Endothelial cell of umbilical vein (primary cell): ENCODE measurements at regions of chr19 and their contacts with region 1.

Region 1: DNA sequence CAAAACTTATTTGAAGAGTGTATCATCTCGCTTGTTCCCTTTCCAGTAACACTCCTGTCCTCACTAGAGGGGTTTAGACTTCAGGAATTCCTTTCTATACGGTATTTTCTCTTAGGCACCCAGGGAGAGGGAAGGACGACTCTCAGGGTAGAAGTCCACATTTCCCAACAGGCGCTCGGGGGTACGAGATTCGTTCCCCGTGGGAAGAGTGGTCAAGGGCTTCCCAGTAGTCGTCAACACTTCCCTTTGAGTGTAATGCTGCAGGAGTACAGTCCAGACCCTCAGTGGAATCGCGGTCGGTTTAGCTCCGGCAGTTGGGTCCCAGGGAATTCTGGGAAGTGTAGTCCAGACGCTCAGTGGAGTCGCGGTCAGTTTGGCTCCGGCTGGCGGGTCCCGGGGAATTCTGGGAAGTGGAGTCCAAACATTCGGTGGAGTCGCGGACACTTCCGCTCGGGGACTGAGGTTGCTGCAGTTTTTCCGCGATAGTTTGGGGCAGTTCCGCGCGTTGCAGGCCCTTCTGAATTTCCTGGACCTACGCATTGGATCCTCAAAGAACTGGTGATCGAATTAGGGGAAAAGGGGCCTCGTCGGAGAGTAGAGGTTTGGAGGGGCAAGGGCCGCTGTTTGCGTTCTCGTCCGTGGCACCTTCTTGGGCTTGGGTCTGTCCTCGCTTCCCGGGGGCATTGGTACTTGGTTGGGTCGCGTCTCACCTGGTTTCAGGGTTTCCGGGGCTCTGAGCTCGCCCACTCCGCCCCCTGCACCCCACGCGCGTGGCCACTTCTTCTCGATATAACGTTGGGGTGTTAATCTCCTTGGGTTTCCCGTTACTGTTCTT is at the start of gene ZNF224:
- DNase-seq: peak; percentile 95
- H3K4me3 ChIP-seq: peak within 1 kb of the TSS; percentile 57 to 97 (median 95)
- H3K27ac ChIP-seq: peak within 1 kb of the TSS; percentile 42
- H3K4me1 ChIP-seq: peaks cover 8% of the 10 kb centered on the region
- H3K27me3 ChIP-seq: no peaks in the 10 kb centered on the region
- CTCF ChIP-seq: no peak
- POLR2A ChIP-seq: peak; percentile 59
- total RNA-seq, gene ZNF224: 19.4 and 21.8 TPM in 2 replicates

Region 2: GRCh38 chr19:43826787-43827754 is 267.1 kb before region 1 on chr19 and contains the start of gene ZNF283:
- CTCF ChIA-PET with region 1: interaction called, 3 read pairs
- POLR2A ChIA-PET with region 1: no interaction called
- dilution Hi-C with region 1: no loop called
- intact Hi-C with region 1: loop called (anchors 10 kb)
- DNase-seq: peak; percentile 79
- H3K4me3 ChIP-seq: peak within 1 kb of the TSS; percentile 68 to 94 (median 71)
- H3K27ac ChIP-seq: no peak within 1 kb of the TSS
- H3K4me1 ChIP-seq: peaks cover 4% of the 10 kb centered on the region
- H3K27me3 ChIP-seq: peaks cover 0 to 3% of the 10 kb centered on the region in 2 experiments
- CTCF ChIP-seq: no peak
- POLR2A ChIP-seq: peak; percentile 72
- total RNA-seq, gene ZNF283: 6.0 and 10.7 TPM in 2 replicates

Region 3: DNA sequence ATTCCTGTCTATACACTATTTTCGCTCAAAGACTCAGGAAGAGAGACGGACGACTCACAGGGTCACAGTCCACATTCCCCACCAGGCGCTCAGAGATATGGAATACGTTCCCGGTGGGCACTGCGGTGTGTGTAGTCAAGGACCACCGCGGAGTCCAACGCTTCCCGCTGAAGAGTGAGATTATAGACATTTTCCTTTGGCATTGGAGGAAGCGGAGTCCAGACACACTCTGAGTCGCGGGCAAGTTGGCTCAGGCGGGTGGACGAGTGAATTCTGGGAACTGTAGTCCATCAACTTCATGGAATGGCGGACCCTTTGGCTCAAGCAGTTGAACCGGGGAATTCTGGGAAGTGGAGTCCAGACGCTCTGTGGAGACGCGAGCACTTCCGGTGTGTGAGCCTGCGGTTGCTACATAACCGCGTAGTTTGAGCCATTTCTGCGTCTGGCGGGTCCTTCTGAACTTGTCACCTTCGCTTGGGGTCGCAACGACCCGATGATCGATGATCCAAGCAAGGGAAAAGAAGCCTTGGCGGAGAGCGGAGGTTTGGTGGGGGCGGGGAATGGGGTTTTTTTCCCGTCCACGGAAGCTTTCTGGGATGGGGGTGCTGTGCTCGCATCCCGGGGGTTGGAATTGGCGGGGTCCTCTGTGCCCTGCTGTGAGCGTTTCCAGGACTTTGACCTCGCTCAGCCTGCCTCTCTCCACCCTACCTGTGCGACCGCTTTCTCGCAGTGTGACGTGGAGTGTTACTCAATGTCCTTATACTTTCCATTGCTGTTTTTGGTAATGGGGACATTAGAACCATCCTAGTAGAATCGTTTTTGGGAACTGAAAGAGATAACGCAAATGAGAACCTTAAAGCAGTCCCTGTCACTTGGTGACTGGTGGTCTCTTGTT is 91.3 kb before region 1 on chr19 and contains the start of gene ZNF230:
- CTCF ChIA-PET with region 1: no interaction called
- POLR2A ChIA-PET with region 1: no interaction called
- dilution Hi-C with region 1: no loop called
- intact Hi-C with region 1: loop called (anchors 2 kb)
- DNase-seq: peak; percentile 96
- H3K4me3 ChIP-seq: peak within 1 kb of the TSS; percentile 59 to 86 (median 84)
- H3K27ac ChIP-seq: peak within 1 kb of the TSS; percentile 36
- H3K4me1 ChIP-seq: peaks cover 6% of the 10 kb centered on the region
- H3K27me3 ChIP-seq: no peaks in the 10 kb centered on the region
- CTCF ChIP-seq: no peak
- POLR2A ChIP-seq: peak; percentile 69
- total RNA-seq, gene ZNF230: 2.9 TPM in 2 replicates

Region 4: DNA sequence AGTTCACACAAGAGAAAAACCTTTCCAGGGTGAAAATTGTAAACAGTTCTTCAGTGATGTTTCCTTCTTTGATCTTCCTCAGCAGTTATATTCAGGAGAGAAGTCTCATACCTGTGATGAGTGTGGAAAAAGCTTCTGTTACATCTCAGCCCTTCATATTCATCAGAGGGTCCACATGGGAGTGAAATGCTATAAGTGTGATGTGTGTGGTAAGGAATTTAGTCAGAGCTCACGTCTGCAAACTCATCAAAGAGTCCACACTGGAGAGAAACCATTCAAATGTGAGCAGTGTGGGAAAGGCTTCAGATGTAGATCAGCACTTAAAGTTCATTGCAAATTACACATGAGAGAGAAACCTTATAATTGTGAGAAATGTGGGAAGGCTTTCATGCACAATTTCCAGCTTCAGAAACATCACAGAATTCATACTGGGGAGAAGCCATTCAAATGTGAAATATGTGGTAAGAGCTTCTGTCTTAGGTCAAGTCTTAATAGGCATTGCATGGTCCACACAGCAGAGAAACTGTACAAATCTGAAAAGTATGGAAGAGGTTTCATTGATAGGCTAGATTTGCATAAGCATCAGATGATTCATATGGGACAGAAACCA is 62.0 kb before region 1 on chr19:
- CTCF ChIA-PET with region 1: no interaction called
- POLR2A ChIA-PET with region 1: no interaction called
- dilution Hi-C with region 1: no loop called
- intact Hi-C with region 1: no loop called
- DNase-seq: no peak
- H3K4me3 ChIP-seq: no peak overlapping the region
- H3K27ac ChIP-seq: no peak overlapping the region
- H3K4me1 ChIP-seq: no peaks in the 10 kb centered on the region
- H3K27me3 ChIP-seq: no peaks in the 10 kb centered on the region
- CTCF ChIP-seq: no peak
- POLR2A ChIP-seq: no peak

Region 5: GRCh38 chr19:44071824-44072542 is 22.2 kb before region 1 on chr19 and contains the start of gene ZNF284:
- CTCF ChIA-PET with region 1: interaction called, 4 read pairs
- POLR2A ChIA-PET with region 1: no interaction called
- dilution Hi-C with region 1: no loop called
- intact Hi-C with region 1: loop called (anchors 1 kb)
- DNase-seq: peak; percentile 91
- H3K4me3 ChIP-seq: peak within 1 kb of the TSS; percentile 10 to 67 (median 55)
- H3K27ac ChIP-seq: peak within 1 kb of the TSS; percentile 14
- H3K4me1 ChIP-seq: peaks cover 10% of the 10 kb centered on the region
- H3K27me3 ChIP-seq: no peaks in the 10 kb centered on the region
- CTCF ChIP-seq: no peak
- POLR2A ChIP-seq: peak; percentile 64
- total RNA-seq, gene ZNF284: 2.4 and 2.7 TPM in 2 replicates

Region 6: DNA sequence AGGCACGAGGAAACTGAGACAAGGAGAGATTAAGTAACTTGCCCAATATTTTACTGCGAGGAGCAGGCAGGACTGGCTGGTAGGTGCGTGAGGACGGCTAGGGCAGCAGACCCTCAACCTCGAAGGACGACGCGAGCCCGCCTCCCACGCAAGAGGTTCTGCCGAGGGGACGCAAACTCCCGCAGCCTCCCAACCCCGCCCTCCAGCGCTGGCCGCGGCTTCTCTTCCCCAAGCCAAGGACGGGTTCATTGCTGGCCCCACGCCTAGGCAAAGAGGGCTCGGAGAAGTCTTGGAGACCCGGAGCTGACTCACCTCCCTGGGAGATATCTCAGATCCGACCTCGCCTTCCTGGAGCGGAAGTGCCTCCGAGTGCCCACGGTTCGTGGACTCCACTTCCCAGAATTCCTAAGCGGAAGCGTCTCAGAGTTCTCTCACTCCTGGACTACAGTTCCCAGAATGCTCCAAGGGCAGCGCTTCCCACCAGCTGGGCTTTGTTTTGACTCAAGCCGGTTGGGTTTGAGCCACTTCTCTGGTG is 210.6 kb after region 1 on chr19 and contains the start of gene ZNF235:
- CTCF ChIA-PET with region 1: no interaction called
- POLR2A ChIA-PET with region 1: no interaction called
- dilution Hi-C with region 1: no loop called
- intact Hi-C with region 1: loop called (anchors 1 kb)
- DNase-seq: peak; percentile 97
- H3K4me3 ChIP-seq: peak within 1 kb of the TSS; percentile 76 to 95 (median 82)
- H3K27ac ChIP-seq: peak within 1 kb of the TSS; percentile 63
- H3K4me1 ChIP-seq: peaks cover 5% of the 10 kb centered on the region
- H3K27me3 ChIP-seq: no peaks in the 10 kb centered on the region
- CTCF ChIP-seq: no peak
- POLR2A ChIP-seq: peak; percentile 51
- total RNA-seq, gene ZNF235: 5.2 TPM in 2 replicates

Region 7: GRCh38 chr19:44401139-44402115 is 307.3 kb after region 1 on chr19 and contains the start of gene ZNF285:
- CTCF ChIA-PET with region 1: no interaction called
- POLR2A ChIA-PET with region 1: no interaction called
- dilution Hi-C with region 1: no loop called
- intact Hi-C with region 1: loop called (anchors 5 kb)
- DNase-seq: peak; percentile 98
- H3K4me3 ChIP-seq: peak within 1 kb of the TSS; percentile 46 to 66 (median 55)
- H3K27ac ChIP-seq: no peak within 1 kb of the TSS
- H3K4me1 ChIP-seq: no peaks in the 10 kb centered on the region
- H3K27me3 ChIP-seq: no peaks in the 10 kb centered on the region
- CTCF ChIP-seq: no peak
- POLR2A ChIP-seq: peak; percentile 19
- total RNA-seq, gene ZNF285: 3.6 and 4.6 TPM in 2 replicates